PC-9 (cell line): ENCODE measurements at regions of chr9 and their contacts with region 1.

Region 1: GRCh38 chr9:89549031-89549644 is 51.2 kb upstream of the SEMA4D start:
- DNase-seq: peak in 1 of 2 experiments; percentile 75
- H3K4me3 ChIP-seq: no peak overlapping the region
- H3K27ac ChIP-seq: no peak overlapping the region
- H3K4me1 ChIP-seq: no peaks in the 10 kb centered on the region
- H3K27me3 ChIP-seq: peaks cover 5% of the 10 kb centered on the region; the same call in 1 of the 2 replicates
- CTCF ChIP-seq: peak; percentile 88

Region 2: GRCh38 chr9:89375191-89375760 is 173.9 kb before region 1 on chr9:
- CTCF ChIA-PET with region 1: interaction called, 4 read pairs
- POLR2A ChIA-PET with region 1: no interaction called
- intact Hi-C with region 1: loop called (anchors 5 kb)
- DNase-seq: no peak
- H3K4me3 ChIP-seq: no peak overlapping the region
- H3K27ac ChIP-seq: no peak overlapping the region
- H3K4me1 ChIP-seq: no peaks in the 10 kb centered on the region
- H3K27me3 ChIP-seq: no peaks in the 10 kb centered on the region
- CTCF ChIP-seq: no peak

Region 3: DNA sequence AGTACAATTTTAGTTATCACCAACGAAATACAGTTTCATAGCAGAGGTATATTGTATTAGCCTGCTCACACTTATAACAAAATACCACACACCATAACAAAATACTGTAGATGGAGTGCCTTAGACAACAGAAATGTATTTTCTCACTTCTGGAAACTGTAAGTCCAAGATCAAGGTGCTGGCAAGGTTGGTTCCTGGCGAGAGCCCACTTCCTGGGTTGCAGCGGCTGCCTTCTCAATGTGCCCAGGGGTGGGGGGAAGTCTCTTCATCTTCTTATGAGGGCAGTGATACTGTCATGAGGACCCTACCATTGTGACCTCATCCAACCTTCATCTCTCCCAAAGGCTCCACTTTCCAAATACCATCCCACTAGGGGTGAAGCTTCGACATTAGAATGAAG is 25.2 kb after region 1 on chr9:
- CTCF ChIA-PET with region 1: no interaction called
- POLR2A ChIA-PET with region 1: no interaction called
- intact Hi-C with region 1: no loop called
- DNase-seq: no peak
- H3K4me3 ChIP-seq: no peak overlapping the region
- H3K27ac ChIP-seq: no peak overlapping the region
- H3K4me1 ChIP-seq: no peaks in the 10 kb centered on the region
- H3K27me3 ChIP-seq: peaks cover 82% of the 10 kb centered on the region
- CTCF ChIP-seq: no peak

Region 4: DNA sequence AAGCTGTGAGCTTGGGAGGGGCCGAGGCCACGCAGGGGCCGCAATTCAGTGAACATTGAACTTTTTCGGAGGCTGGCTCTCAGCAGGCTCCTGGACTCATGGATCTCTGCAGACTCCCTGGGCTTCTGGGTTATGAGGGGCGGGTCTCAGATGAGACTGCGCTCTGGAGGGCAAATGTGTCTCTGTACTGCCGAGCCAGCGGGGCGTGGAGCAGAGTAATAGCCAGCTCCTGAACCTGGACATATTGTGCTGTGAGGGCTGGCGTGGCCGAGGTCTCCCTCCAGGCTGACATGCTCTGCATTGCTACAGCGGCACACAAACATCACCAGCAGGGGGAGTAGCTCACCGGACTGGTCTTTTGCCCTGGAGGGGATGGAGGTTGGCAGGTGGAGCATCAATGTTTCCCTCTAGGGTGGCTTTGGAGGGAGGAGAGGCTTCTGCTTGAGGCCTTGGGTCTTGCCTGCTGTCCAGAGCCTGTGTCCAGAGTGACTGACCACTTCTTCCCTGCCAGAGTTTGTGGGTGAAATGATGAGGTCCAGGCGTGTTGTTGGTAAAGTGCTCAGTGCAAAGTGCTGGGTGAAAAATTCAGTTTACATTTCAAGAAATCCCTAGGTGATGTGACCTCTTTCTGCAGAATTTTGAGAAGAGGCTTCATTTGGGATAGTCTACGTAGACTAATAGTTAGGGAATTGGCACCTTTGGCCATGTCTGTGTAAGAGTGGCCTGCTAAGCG is 44.7 kb after region 1 on chr9:
- CTCF ChIA-PET with region 1: no interaction called
- POLR2A ChIA-PET with region 1: no interaction called
- intact Hi-C with region 1: no loop called
- DNase-seq: peak in 1 of 2 experiments; percentile 51
- H3K4me3 ChIP-seq: no peak overlapping the region
- H3K27ac ChIP-seq: no peak overlapping the region
- H3K4me1 ChIP-seq: no peaks in the 10 kb centered on the region
- H3K27me3 ChIP-seq: peaks cover 93% of the 10 kb centered on the region
- CTCF ChIP-seq: peak; percentile 66